WTC11 (cell line): ENCODE measurements at regions of chr9 and their contacts with region 1.

Region 1: GRCh38 chr9:123349691-123350480 is 6.1 kb upstream of the CRB2 start:
- DNase-seq: peak; percentile 84
- ATAC-seq: peak; percentile 78
- H3K4me3 Mint-ChIP-seq: no peak overlapping the region
- H3K27ac Mint-ChIP-seq: no peak overlapping the region
- H3K4me1 Mint-ChIP-seq: peaks cover 11% of the 10 kb centered on the region
- H3K27me3 Mint-ChIP-seq: peaks cover 15% of the 10 kb centered on the region
- CTCF ChIP-seq: peak; percentile 97

Region 2: DNA sequence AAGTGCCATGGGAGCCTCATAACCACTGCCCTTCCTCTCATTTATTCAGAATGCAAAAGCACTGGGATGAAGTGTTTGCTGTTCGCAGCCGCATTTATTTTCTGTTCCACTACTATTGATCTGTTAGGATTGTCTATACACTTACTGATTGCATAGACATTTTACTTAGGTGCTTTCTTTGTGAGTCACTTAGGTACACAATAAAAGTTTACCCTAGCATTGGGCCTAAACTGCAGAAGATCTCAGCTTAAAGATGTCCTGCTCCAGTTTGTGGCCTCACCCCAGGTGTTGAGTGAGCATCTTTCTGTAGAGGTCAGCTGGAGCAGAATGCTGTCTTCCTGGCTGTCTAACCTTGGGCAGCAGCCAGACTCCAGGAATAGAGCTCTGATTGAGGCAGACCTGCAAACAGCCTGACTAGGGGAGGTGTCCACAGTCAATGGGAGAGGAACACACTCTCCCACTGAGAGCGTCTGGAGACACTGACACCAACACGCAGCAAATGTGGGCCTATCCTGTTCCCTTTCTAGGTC is 262.5 kb before region 1 on chr9:
- CTCF ChIA-PET with region 1: interaction called, 18 read pairs
- POLR2A ChIA-PET with region 1: no interaction called
- DNase-seq: no peak
- ATAC-seq: no peak
- H3K4me3 Mint-ChIP-seq: no peak overlapping the region
- H3K27ac Mint-ChIP-seq: no peak overlapping the region
- H3K4me1 Mint-ChIP-seq: peaks cover 23% of the 10 kb centered on the region
- H3K27me3 Mint-ChIP-seq: no peaks in the 10 kb centered on the region
- CTCF ChIP-seq: no peak

Region 3: GRCh38 chr9:123112015-123112975 is 237.6 kb before region 1 on chr9:
- CTCF ChIA-PET with region 1: interaction called, 23 read pairs
- POLR2A ChIA-PET with region 1: no interaction called
- DNase-seq: peak; percentile 53
- ATAC-seq: peak; percentile 62
- H3K4me3 Mint-ChIP-seq: no peak overlapping the region
- H3K27ac Mint-ChIP-seq: peak overlapping the region; percentile 83
- H3K4me1 Mint-ChIP-seq: peaks cover 17% of the 10 kb centered on the region
- H3K27me3 Mint-ChIP-seq: no peaks in the 10 kb centered on the region
- CTCF ChIP-seq: no peak

Region 4: GRCh38 chr9:123217148-123217585 is 132.7 kb before region 1 on chr9:
- CTCF ChIA-PET with region 1: no interaction called
- POLR2A ChIA-PET with region 1: no interaction called
- DNase-seq: no peak
- ATAC-seq: no peak
- H3K4me3 Mint-ChIP-seq: no peak overlapping the region
- H3K27ac Mint-ChIP-seq: peak overlapping the region; percentile 26; the same call in 1 of the 2 replicates
- H3K4me1 Mint-ChIP-seq: peaks cover 43% of the 10 kb centered on the region
- H3K27me3 Mint-ChIP-seq: no peaks in the 10 kb centered on the region
- CTCF ChIP-seq: no peak

Region 5: DNA sequence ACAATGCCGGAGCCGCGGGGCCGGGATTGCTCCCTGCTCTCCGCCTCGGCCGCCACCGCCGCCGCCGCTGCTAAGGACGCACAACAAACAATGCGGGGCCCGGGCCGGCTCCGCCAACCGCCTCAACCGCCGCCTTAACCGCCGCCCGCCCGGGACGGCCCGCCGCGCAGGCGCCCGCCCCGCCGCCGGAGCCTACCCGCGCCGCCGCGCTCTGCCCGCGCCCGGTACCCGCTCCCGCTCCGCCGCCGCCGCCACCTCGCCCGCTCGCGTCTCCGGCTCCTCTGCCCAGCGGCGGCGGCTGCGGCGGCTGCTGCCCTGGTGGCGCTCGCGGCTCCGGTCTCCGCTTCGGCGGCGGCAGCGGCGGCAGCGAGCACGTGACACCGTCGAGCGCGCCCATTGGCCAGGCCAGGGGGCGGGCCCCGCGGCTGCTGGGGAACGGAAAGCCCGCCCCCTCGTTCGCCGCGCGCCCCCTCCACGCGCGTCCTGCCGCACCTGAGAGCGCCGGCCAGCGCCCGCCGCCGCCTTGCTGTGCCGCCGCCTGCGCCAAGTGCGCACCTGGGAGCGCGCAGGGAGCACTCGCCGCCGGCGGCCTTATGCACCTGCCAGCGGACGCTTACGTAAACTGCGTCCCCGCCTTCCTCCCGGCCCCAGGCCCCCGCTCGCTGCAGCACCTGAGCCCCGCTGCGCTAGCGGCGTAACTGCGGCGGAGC is 81.5 kb before region 1 on chr9 and contains the start of gene STRBP:
- CTCF ChIA-PET with region 1: interaction called, 11 read pairs
- POLR2A ChIA-PET with region 1: interaction called, 3 read pairs
- DNase-seq: peak; percentile 89
- ATAC-seq: peak; percentile 83
- H3K4me3 Mint-ChIP-seq: peak within 1 kb of the TSS; percentile 77
- H3K27ac Mint-ChIP-seq: no peak within 1 kb of the TSS; the same call in 1 of the 2 replicates
- H3K4me1 Mint-ChIP-seq: peaks cover 42% of the 10 kb centered on the region
- H3K27me3 Mint-ChIP-seq: no peaks in the 10 kb centered on the region; the same call in 1 of the 2 replicates
- CTCF ChIP-seq: no peak
- total RNA-seq, gene STRBP: 90.9 to 102 TPM (median 96.3 TPM) in 3 replicates

Region 6: GRCh38 chr9:123326662-123327093 is 23.2 kb before region 1 on chr9:
- CTCF ChIA-PET with region 1: interaction called, 16 read pairs
- POLR2A ChIA-PET with region 1: no interaction called
- DNase-seq: no peak
- ATAC-seq: peak; percentile 55
- H3K4me3 Mint-ChIP-seq: no peak overlapping the region
- H3K27ac Mint-ChIP-seq: no peak overlapping the region
- H3K4me1 Mint-ChIP-seq: peaks cover 29% of the 10 kb centered on the region
- H3K27me3 Mint-ChIP-seq: no peaks in the 10 kb centered on the region; the same call in 1 of the 2 replicates
- CTCF ChIP-seq: no peak

Region 7: DNA sequence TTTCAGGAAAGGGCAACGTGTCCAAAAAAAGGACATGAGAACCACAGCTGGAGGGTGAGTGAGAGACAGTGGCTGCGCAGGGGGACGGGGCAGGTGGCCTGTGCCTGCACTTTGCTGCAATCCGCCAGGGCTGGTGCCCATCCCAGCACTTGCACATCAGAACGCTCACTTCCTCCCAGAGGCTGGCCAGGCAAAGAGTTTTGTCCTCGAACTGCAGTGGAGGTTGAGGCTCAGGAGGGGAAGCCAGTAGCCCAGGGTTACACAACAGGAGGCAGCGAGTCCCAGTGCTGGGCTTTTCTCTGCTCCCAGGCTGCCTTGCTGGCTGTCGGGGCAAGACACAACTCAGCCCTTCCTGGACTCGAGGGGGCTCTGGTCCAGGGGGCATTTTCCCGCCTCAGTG is 39.2 kb after region 1 on chr9:
- CTCF ChIA-PET with region 1: interaction called, 80 read pairs
- POLR2A ChIA-PET with region 1: no interaction called
- DNase-seq: no peak
- ATAC-seq: no peak
- H3K4me3 Mint-ChIP-seq: no peak overlapping the region
- H3K27ac Mint-ChIP-seq: no peak overlapping the region
- H3K4me1 Mint-ChIP-seq: no peaks in the 10 kb centered on the region
- H3K27me3 Mint-ChIP-seq: no peaks in the 10 kb centered on the region; the same call in 1 of the 2 replicates
- CTCF ChIP-seq: no peak